Psoas muscle (tissue), 8 donors: ENCODE measurements at regions of chr10 and their contacts with region 1.

Region 1: GRCh38 chr10:132396495-132397035 is 435 bp upstream of the PWWP2B start:
- DNase-seq: peak; percentile 81 to 89
- ATAC-seq: peak; percentile 59 to 68 (median 66)
- H3K4me3 ChIP-seq: peak overlapping the region; percentile 75
- H3K27ac ChIP-seq: peak overlapping the region; percentile 91
- H3K4me1 ChIP-seq: peaks cover 45% of the 10 kb centered on the region
- H3K27me3 ChIP-seq: no peaks in the 10 kb centered on the region
- CTCF ChIP-seq: peak; percentile 38

Region 2: DNA sequence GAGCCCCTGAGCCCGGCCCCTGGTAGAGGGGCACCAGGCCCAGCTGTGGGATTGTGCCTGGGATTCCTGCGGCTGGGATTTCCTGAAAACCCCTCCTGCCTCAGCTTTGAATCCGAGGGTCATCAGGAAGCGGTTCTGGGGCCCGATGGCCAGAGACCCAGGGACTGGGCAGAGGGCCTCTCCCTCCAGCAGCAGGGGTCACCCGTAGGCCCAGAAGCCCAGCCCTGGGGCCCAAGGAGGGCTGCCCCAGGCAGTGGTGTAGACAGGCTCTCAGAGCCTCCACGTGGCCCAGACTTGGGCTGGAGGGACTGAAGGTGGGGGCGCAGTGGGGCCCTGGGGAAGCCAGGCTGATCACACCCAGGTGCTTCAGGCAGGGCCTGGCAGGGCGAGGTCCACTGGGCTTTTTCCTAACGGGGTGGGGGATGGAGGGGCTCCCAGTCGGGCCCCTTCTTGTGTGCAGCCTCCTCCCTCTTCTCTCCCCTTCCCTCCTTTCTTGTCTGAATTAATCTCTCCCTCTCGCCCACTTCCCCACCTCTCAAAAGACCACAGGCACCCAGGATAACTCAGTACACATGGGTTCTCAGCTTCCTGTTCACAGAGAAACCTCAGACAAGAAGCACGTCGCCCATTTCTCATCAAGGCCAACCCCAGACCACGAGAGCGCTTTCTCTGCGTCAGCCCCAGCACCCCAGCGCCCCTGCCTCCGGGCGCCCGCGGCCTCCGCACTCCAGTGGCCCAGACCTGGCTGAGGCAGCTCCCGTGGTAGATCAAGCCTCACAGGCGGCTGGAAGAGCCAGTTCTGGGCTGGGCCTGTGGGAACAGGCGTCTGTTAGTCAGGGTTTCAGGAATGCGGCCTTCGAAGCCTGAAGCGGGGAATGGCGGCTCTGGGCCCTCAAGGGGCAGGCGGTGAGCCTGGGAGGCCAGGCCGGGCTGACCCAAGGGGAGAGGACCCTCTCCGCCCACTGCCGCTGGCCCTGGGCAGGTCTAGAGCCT is 50.9 kb after region 1 on chr10:
- intact Hi-C with region 1: loop called in 1 of 2 experiments (anchors 2 kb)
- DNase-seq: no peak
- ATAC-seq: peak in 3 of 4 donors; percentile 2 to 9 (median 8)
- H3K4me3 ChIP-seq: no peak overlapping the region
- H3K27ac ChIP-seq: peak overlapping the region; percentile 71
- H3K4me1 ChIP-seq: peaks cover 7% of the 10 kb centered on the region
- H3K27me3 ChIP-seq: no peaks in the 10 kb centered on the region
- CTCF ChIP-seq: no peak

Region 3: DNA sequence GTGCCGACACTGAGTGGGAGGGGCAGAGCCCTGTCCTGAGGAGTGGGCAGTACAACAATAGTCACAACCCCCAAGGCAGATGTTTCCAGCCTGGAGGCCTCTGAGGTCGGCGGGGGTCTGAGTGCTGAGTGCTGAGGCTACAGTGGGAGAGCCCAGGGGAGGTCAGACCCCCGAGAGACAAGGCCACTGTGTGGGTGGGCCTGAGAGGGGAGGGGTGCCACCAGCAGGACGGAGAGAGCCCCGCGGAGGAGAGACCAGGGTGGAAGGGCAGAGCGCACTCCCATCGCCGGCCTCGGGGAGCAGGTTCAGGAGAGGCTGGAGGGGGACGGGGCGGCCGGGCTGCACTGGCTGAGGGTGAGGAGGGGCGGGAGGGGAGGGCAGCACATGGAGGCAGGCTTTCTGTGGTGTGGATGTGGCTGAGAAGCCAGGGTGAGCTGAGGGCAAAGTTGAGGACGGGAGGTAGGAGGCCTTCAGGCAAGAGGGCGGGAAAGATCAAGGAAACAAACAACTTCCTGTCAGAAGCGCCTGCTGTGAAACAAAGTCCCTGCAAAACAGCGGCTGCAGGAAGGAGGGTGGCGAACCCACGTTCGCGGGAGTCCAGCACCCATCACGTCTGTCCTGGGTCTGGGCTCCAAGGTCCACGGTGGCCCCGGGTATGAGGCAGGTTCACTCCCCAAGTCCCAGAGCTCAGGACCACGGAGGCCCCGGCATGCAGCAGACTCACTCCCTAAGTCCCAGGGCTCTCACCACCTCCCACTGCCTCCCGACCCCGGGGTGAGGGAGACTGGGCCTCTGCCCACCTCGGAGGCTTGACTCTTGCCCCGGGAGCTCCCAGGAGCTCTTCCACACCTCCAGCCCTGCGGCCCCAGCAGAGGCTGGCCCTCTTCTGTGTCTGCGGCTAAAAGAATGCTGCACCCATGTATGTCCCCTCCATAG is 466.2 kb after region 1 on chr10:
- intact Hi-C with region 1: no loop called
- DNase-seq: peak in 1 of 2 donors; percentile 39
- ATAC-seq: no peak
- H3K4me3 ChIP-seq: no peak overlapping the region
- H3K27ac ChIP-seq: no peak overlapping the region
- H3K4me1 ChIP-seq: no peaks in the 10 kb centered on the region
- H3K27me3 ChIP-seq: peaks cover 0 to 38% (median 21%) of the 10 kb centered on the region in 3 donors
- CTCF ChIP-seq: no peak